GM10248 (cell line): ENCODE measurements at regions of chr16 and their contacts with region 1.

Region 1: DNA sequence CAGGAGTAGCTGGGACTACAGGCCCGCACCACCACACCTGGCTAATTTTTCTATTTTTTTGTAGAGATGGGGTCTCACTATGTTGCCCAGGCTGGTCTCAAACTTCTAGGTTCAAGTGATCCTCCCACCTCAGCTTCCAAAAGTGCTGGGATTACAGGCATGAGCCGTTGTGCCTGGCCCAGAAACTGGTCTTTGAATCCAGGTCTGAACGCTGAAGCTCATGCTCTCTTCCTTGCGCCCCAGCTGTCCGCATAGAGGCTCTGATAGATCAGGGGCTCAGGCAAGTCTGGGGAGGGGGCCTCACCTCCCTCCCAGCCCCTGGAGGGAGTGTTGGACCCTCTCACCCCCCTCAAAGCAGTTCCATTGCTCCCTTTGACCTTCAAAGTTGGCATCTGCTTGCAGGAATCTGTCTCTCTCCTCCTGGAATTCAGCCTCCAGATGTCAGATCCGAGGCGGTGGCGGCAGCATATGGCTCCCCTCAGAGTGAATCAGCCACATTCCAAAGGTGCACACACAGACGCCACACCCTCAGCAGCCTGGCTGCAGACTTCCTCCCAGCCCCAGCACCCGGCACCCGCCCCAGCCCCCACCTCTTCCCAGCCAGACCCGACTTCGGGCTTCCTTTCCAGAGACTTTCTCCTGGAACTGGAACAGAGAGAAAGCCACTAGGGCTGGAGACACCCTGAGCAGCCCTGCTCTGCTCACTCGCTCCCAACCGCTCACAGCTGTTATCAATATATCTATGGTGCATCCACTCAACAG is 16.9 kb upstream of the GLIS2 start:
- DNase-seq: no peak
- CTCF ChIP-seq: no peak

Region 2: DNA sequence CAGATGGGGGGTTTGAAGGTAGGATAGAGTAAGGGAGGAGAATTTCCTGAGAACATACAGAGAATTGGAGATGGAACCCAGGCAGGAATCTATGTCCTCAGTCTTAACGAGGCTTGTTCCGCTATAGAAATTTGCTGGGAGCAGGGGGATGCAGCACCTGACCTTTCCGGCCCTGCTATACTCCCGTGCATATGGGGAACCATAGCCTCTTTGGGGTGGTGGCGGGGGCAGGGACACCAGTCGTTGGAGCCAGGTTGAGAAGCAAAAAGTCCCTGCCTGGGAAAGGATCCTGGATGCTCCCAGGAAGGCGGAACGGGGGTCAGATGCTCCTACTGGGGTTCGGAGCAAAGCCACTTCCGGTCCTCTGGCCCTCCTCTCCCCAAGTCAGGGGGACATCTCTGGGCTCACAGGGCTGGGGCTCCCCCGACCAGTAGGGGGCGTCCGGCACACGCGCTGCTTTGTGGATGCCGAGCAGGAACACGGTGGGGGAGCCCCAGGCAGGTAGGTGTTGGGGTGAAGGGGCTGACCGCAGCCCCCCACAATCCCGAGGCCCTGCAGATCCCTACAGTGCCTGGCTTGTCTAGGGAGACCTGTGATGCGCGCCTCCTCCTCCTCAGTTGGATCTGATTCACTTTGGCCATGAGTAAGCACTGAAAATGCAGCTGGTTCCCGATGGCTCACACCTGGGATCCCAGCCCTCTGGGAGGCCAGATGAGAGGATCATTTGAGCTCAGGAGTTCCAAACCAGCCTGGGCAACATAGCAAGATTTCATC is 10.6 kb before region 1 on chr16:
- CTCF ChIA-PET with region 1: interaction called, 23 read pairs
- POLR2A ChIA-PET with region 1: no interaction called
- DNase-seq: peak; percentile 94
- CTCF ChIP-seq: peak; percentile 99